ENCODE measurements at regions of chr22 and their contacts with region 1.

Region 1: DNA sequence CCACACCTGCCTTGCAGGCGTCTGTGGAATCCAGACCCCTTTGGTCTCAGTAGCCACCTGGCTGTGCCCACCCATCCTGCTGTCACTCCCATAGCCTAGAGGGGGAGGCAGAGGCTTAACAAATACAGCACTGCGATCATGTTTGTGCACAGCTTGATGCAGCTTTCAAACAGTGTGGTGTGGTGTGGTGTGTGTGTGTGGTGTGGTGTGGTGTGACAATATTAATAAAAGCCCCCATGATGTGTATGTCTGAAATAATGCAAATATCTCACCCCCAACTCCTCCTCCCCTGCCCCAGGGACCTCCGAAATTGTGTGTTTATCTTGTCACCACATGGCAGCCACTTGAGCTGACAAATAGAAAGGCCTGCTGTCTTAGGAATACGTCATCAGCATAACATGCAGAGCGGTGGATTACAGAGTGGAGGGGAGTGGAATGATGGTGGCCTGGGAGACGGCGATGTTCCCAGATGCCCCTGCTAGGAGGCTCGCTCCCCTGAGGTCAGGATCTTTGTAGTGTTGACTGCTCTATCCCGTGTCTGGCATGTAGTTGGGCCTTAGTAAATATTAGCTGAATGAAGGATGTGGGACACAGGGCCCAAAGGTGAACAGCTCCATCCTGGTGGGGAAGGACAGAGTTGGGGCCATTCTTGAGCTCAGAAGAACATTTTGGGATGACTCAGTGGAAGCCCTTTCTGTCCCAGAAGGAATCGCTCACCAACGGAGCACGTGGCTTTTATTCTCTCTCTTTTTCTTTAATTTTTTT is 2.8 kb downstream of the PDXP start:
- DNase-seq: peak in 2 of 10 donors; percentile 37 to 42

Region 2: DNA sequence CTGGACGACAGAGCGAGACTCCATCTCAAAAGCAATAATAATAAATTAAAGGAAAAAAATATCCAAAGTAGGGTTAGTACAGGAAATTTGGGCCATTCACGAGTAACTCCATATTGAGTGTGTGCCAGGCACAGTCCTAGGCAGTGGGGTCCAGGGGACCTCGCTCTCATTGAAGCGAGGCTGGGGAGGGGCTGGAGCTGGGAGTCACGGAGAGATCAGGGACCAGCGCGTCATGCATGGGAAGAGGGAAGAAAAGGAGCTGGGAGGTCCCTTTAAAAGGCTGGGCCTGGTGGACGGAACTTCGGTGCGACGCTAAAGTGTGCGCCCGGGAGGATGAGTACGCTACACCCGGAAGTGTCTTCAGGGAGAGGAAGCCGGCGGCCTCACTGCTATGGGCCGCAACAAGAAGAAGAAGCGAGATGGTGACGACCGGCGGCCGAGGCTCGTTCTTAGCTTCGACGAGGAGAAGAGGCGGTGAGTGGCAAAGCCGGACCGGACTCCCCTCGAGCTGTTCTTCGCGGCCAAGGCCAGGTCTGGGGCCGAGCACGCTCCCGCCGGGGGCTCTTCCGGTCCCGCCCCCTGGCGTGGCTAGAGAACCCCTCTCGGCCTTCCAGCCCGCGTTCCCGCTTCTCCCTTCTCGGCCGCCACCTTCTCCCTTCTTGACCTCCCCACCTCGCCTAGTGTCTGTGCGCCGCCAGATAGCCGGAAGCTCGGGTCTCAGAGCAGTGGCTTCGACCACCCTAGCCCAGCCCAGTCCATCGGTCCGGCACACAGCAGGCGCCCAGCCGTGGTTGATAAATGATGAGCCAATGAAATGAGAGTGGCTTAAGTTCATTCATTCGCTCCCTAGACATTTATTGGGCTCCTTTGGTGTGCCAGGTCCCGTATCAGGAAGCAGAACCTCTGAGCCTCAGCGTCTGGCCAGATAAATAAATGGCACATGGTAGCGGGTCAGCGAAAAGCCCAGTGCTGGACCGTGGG is 24.9 kb after region 1 on chr22 and contains the start of gene NOL12:
- intact Hi-C with region 1: no loop called
- DNase-seq: peak; percentile 74 to 97 (median 80)

Region 3: DNA sequence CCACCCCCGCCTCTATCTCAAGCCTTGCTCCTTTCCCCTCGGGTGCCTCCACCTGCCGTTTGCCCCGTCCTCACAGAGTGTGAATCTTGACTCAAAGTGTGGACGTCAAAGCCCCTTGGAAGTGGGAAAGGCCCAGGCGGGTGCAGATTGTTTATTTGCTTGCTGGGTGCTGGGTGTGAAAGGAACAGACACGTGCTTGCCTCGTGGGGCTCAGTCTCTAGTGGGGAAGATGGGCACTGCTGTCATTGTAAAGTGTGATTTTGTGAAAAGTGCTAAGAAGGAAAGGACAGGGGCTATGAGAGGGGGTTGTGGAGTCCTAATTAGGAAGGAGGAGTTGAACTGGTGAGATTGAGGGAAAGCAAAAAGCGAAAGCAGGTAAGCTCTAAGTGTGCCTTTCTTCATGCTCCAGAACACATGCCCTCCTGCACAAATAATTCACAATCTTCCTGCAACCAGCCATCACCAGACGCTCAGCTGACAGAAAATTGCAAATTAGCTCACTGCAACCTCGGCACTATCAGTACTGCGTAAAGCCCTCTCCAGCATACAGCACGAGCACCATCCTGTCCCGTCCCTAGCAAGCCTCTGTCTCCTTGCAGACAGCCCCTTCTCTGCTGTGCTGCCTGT is 136.6 kb after region 1 on chr22:
- intact Hi-C with region 1: loop called (anchors 10 kb)
- DNase-seq: no peak

Measured in posterior cingulate gyrus (tissue), 11 donors.